Transverse colon (tissue), 4 donors: ENCODE measurements at regions of chr17 and their contacts with region 1.

Region 1: GRCh38 chr17:32142038-32142856 is at the start of gene RHOT1:
- DNase-seq: peak; percentile 76
- H3K4me3 ChIP-seq: peak within 1 kb of the TSS; percentile 80 to 99 (median 86)
- H3K27ac ChIP-seq: peak within 1 kb of the TSS; percentile 90 to 97 (median 94)
- H3K4me1 ChIP-seq: peaks cover 7 to 37% (median 16%) of the 10 kb centered on the region in 4 donors
- H3K27me3 ChIP-seq: no peaks in the 10 kb centered on the region
- CTCF ChIP-seq: peak; percentile 48 to 60 (median 55)
- EP300 ChIP-seq: no peak
- POLR2A ChIP-seq: no peak
- total RNA-seq, gene RHOT1: 10.5 to 43.3 (median 30.8) TPM

Region 2: GRCh38 chr17:32006957-32007462 is 135.2 kb before region 1 on chr17 and contains the start of gene LRRC37B:
- in situ Hi-C with region 1: no loop called
- intact Hi-C with region 1: loop called (anchors 5 kb)
- DNase-seq: peak; percentile 92
- H3K4me3 ChIP-seq: peak within 1 kb of the TSS; percentile 79 to 97 (median 84)
- H3K27ac ChIP-seq: peak within 1 kb of the TSS; percentile 87 to 95 (median 88)
- H3K4me1 ChIP-seq: peaks cover 0 to 20% (median 17%) of the 10 kb centered on the region in 4 donors
- H3K27me3 ChIP-seq: no peaks in the 10 kb centered on the region
- CTCF ChIP-seq: peak; percentile 88 to 99 (median 97)
- EP300 ChIP-seq: no peak
- POLR2A ChIP-seq: peak; percentile 26
- total RNA-seq, gene LRRC37B: 21.0 to 34.0 (median 24.7) TPM

Region 3: DNA sequence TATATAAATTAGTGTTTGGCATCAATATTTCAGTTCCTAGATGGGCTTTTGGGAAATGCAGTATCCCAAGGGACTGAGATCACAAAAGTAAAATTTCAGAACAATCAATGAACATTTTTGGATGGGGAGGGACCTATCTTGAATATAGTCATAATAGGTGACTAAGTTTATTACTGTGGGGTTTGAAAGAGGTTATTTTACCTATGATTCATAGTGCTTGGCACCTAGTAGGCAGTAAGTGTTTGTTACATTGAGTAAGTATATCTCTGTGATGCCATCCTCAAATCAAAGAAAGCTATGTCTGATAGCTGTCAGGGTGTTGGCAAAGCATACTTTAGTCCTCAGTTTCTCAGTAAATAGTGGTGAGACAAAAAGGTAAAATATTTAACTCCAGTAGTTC is 244.6 kb after region 1 on chr17:
- in situ Hi-C with region 1: no loop called
- intact Hi-C with region 1: no loop called
- DNase-seq: no peak
- H3K4me3 ChIP-seq: no peak overlapping the region
- H3K27ac ChIP-seq: no peak overlapping the region
- H3K4me1 ChIP-seq: no peaks in the 10 kb centered on the region
- H3K27me3 ChIP-seq: no peaks in the 10 kb centered on the region
- CTCF ChIP-seq: no peak
- EP300 ChIP-seq: no peak
- POLR2A ChIP-seq: no peak